GM10248 (cell line): ENCODE measurements at regions of chr1 and their contacts with region 1.

Region 1: GRCh38 chr1:159936273-159936904 is 9.0 kb downstream of the IGSF9 start:
- DNase-seq: peak; percentile 87
- CTCF ChIP-seq: peak; percentile 98

Region 2: DNA sequence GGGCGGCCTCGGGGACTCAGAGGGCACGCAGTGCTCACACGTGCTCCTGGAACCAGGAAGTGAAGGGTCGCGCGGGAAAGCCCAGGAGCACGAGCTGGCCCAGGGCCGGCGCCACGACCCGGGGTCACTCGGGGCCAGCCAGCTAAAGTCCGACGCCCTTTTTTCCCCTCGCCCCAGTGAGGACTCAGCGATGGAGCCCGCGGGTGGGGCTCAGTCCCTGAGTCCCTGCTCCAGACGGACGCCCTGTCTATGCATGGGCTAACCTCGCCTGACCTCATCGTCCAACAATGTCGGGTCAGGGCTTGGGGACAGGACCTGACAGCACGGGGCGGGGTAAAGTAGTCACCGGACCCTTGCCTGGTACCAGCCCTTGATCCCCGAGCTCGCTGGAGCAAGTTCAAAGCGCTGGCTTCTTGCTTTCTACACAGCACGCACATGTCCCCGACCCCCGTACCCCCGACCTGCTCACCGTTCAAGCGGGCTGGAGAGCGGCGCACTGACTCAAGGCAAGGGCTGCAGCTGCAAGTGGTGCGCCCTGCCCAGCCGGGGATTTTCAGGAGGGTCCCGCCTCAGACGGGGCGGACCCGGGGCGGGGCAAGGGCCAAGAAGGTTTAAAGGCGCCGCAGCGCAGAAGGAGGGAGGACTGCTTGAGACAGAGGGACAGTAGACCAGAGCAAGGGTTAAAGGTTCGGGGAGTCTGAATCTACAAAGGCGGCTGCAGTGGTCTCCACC is 11.2 kb before region 1 on chr1 and contains the start of gene TAGLN2:
- CTCF ChIA-PET with region 1: interaction called, 50 read pairs
- POLR2A ChIA-PET with region 1: interaction called, 3 read pairs
- DNase-seq: peak; percentile 91
- CTCF ChIP-seq: no peak

Region 3: DNA sequence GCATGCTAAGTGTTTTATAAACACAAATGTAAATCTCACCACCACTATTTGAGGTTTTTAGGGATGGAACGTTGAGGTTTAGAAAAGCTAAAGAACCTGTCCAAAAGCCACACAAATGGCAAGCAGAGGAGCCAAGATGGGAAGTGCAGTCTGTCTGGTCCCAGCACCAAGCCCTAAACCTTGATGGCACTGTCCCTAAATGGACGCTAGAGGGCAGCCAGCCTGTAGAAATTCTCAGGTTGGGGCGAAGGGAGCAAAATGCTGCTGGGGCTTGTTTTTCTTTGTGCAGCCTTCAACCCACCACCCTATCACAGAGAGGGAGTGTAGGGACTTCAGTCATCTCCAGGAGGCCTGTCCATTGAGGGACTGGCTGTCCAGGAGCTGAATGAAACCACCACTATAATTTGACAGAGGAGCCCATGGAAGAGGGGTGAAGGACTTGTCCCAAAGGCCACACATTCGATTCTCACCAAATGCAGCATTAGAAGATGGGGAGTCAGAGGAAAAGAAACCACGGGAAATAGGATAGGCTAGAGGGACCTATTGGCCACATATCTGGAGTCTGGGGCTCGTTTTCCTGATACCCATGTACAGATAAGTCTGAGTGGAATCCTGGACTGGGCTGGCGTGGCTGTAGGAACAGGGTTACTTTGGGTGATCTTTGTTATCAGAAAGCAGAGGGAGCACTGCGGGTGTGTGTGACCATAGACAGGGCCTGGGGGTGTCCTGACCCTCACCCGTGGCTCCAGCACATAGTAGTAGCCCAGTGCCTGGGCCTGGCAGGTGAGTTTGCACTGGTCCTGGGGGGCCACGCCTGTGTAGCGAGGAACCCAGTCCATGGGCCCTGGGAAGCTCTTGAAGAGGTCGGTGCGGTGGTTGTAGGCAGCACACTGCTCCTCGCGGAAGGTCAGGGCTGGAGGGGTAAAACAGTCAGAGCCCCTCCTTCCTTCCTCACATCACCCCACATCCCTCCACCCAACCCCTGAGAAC is 1256.4 kb after region 1 on chr1:
- CTCF ChIA-PET with region 1: no interaction called
- POLR2A ChIA-PET with region 1: no interaction called
- DNase-seq: peak; percentile 83
- CTCF ChIP-seq: peak; percentile 94